Spleen (tissue), 13 donors: ENCODE measurements at regions of chr9 and their contacts with region 1.

Region 1: DNA sequence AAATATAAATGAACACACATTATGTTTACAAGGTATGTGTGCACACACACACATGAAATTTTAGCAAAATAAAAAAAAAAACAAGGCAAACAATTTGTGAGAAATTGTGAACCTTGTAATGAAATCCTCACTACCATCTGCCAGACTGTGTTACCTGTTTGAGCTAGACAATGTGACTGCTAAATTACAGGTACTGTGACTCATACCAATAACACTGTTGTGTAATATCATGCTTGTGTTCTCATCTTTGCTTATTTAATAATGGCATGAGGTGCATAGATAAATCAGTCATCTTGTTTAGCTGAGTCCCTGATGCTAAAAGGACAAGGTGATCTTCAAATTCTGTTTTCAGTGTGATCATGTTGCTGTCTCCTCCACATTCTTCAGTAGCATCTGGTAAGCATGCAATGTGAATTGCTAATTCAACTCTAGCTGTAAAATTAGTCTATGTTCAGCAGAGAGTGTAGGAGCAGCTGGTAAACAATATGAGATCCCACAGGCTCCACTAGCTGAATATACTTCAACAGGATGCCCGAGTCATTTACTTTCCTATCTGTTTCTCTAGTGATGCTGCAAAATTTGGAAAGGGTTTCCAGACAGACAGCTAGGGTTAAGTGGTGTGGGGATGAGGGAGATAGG is 966.3 kb upstream of the C9orf72 start:
- DNase-seq: no peak
- H3K4me3 ChIP-seq: no peak overlapping the region
- H3K27ac ChIP-seq: no peak overlapping the region
- H3K4me1 ChIP-seq: no peaks in the 10 kb centered on the region
- H3K27me3 ChIP-seq: no peaks in the 10 kb centered on the region
- CTCF ChIP-seq: no peak
- POLR2A ChIP-seq: no peak

Region 2: GRCh38 chr9:28600226-28600625 is 60.7 kb after region 1 on chr9:
- intact Hi-C with region 1: loop called (anchors 10 kb)
- DNase-seq: no peak
- H3K4me3 ChIP-seq: no peak overlapping the region
- H3K27ac ChIP-seq: no peak overlapping the region
- H3K4me1 ChIP-seq: no peaks in the 10 kb centered on the region
- H3K27me3 ChIP-seq: no peaks in the 10 kb centered on the region
- CTCF ChIP-seq: no peak
- POLR2A ChIP-seq: no peak

Region 3: DNA sequence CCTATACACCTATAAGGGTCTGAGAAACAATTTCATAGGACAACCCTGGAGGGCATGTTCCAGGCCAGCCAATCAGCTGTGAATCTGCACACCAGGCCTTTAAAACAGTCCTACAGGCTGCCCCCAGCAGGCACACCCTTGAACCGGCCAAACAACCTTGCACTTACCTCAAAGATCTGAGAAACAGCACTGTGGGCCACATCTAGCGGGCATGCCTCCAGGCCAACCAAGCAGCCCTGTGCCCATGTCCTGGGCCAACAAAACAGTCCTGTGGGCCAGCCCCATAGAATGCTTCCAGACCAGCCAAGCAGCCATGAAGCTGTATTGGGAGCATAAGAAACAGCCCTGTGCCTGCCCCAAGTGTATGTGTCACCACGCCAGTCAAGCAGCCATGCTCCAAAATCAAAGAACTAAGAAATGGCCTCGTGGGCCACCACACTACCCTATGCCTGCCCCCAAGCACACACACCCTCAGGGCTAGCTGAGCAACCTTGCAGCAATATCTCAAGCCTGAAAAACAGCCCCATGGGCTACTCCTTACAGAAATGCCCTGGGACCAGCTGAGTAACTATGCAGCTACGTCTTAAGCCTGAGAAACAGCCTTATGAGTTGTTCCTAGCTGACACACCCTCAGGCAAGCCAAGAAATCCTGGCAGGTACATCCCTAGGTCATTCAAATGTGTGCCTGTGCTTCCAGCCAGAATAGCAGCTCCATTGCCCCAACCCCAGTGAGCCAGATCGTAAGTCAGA is 1277.6 kb after region 1 on chr9:
- intact Hi-C with region 1: no loop called
- DNase-seq: peak; percentile 51
- H3K4me3 ChIP-seq: no peak overlapping the region
- H3K27ac ChIP-seq: no peak overlapping the region
- H3K4me1 ChIP-seq: no peaks in the 10 kb centered on the region
- H3K27me3 ChIP-seq: no peaks in the 10 kb centered on the region
- CTCF ChIP-seq: no peak
- POLR2A ChIP-seq: no peak